ENCODE measurements at regions of chr5 and their contacts with region 1.

Region 1: DNA sequence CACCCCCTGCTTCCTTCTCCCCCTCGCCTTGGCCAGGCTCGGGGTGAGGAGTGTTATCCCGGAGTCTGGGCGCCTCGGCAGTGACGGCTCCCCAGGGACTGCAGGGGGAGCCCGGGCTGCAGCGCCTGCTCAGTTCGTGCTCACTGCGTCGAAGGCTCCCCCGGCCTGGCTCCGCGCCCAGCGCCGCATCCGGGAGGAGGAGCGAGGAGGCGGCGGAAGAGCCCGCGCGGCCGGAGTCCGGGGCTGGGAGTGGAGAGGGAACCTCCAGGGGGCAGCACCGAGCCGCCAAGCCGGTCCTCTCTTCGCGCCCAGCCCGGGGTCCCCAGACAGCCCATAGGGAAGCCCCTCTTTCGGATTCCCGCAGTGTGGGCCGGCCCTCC is 1.3 kb upstream of the EGR1 start:
- DNase-seq: peak; percentile 95
- H3K4me3 Mint-ChIP-seq: peak overlapping the region; percentile 83
- H3K27ac Mint-ChIP-seq: peak overlapping the region; percentile 95
- H3K4me1 Mint-ChIP-seq: peaks cover 50% of the 10 kb centered on the region
- H3K27me3 Mint-ChIP-seq: no peaks in the 10 kb centered on the region

Region 2: GRCh38 chr5:137754126-137754960 is 709.7 kb before region 1 on chr5 and contains the start of gene HNRNPA0:
- CTCF ChIA-PET with region 1: no interaction called
- POLR2A ChIA-PET with region 1: no interaction called
- intact Hi-C with region 1: loop called (anchors 1 kb)
- DNase-seq: peak; percentile 97
- H3K4me3 Mint-ChIP-seq: peak within 1 kb of the TSS; percentile 93
- H3K27ac Mint-ChIP-seq: peak within 1 kb of the TSS; percentile 100
- H3K4me1 Mint-ChIP-seq: peaks cover 32% of the 10 kb centered on the region
- H3K27me3 Mint-ChIP-seq: peaks cover 3% of the 10 kb centered on the region
- total RNA-seq, gene HNRNPA0: 29.2 to 29.6 TPM

Region 3: DNA sequence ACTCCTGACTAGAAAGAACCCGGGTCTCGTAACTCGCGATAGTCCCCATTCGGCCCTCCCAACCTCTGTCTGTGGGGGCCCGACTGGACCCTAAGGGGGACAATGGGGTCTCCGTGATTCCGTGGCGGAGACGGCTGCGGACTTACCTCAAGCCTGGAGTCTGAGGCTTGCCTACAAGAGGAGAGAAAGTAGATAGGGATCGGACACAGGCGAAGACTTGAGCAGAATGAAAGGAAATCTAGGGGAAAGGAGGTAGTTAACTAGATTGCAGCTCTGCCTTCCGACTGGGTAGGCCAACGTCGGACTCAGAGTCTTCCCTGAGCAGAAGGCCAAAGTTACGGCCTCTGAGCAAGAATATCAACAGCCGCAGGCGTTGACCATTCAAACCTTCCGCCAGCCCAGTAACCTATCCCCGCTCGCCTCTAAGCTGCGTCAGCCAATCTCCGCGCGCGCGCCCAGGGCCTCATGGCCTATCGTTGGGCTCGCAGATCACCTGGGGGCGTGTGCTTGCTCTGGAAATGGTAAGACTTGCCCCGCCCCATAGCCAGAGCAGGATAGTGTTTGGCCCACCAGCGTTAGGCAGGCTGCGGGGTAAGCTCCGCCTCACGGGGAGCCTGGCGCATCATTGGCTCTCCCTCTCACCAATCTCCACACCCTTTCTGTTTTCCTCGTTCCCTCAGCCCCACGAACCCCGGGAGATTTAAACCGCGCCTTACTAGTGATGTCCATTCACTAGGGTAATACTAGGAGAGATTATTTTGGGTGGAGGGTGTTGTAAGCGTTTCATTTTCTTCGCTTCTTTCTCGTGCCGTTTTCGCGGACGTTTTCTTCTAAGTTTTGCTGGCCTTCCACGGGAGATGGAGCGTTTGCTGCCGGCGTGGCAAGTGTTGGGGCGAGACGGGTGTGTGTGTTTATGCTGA is 132.3 kb before region 1 on chr5 and contains the start of gene CDC25C:
- CTCF ChIA-PET with region 1: no interaction called
- POLR2A ChIA-PET with region 1: no interaction called
- intact Hi-C with region 1: loop called (anchors 2 kb)
- DNase-seq: peak; percentile 98
- H3K4me3 Mint-ChIP-seq: peak within 1 kb of the TSS; percentile 83
- H3K27ac Mint-ChIP-seq: peak within 1 kb of the TSS; percentile 81
- H3K4me1 Mint-ChIP-seq: peaks cover 23% of the 10 kb centered on the region
- H3K27me3 Mint-ChIP-seq: no peaks in the 10 kb centered on the region
- total RNA-seq, gene CDC25C: 19.1 to 19.2 TPM

Region 4: DNA sequence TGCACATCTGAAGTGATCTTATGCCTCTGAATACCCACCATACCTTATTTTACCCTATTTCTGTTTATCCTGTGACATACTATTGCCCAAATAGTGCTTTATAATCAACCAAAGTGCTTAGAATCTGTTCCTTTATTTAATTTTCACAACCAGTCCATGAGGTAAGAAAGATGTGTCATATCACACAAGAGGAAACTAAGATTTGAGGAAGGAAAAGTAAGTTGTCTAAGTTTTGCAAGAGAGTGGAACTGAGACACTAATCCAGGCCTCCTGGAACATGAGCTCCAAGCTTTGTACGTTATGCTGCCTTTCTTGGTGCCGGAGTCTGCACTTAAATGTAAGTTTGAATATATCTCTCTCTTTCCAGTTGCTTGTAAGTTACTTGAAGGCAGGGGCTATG is 94.3 kb before region 1 on chr5:
- CTCF ChIA-PET with region 1: no interaction called
- POLR2A ChIA-PET with region 1: no interaction called
- intact Hi-C with region 1: no loop called
- DNase-seq: no peak
- H3K4me3 Mint-ChIP-seq: no peak overlapping the region
- H3K27ac Mint-ChIP-seq: no peak overlapping the region
- H3K4me1 Mint-ChIP-seq: peaks cover 45% of the 10 kb centered on the region
- H3K27me3 Mint-ChIP-seq: no peaks in the 10 kb centered on the region

Region 5: DNA sequence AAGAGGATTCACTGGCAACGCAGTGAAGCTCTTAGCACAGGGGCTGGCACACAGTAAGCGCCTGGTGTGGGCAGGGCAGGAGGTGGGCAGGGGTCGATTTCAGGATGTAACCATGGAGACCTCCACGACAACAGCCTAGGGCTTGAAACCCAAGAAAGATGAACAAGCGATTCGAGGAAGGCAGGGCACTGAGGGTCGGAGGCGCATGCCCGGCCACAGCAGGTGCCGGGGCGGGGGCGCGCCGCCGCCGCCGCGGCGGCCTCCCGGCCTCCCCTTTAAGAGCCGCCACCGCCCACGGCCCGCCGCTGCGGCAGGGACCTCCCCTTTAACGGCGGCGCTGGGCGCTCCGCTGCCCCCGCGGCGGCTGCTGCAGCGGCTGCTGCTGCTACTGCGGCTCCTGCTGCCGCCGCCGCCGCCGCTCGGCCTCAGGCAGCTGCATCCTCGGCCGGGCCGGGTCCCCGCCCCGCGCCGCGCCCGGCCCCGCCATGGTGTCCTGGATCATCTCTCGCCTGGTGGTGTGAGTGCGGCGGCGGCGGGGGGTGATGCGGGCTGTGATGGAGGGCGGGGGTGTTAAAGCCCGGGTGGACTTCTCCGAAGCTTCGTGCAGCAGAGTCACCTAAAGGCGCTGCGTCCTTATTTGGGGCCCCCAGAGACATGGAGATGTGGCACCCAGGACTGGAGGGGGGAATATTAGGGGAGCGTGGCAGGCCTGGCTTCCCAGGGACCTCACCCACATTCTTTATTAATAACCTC is 25.1 kb before region 1 on chr5 and contains the start of gene REEP2:
- CTCF ChIA-PET with region 1: interaction called, 4 read pairs
- POLR2A ChIA-PET with region 1: interaction called, 5 read pairs
- intact Hi-C with region 1: loop called (anchors 2 kb)
- DNase-seq: peak; percentile 80
- H3K4me3 Mint-ChIP-seq: peak within 1 kb of the TSS; percentile 78
- H3K27ac Mint-ChIP-seq: peak within 1 kb of the TSS; percentile 60
- H3K4me1 Mint-ChIP-seq: peaks cover 16% of the 10 kb centered on the region
- H3K27me3 Mint-ChIP-seq: peaks cover 3% of the 10 kb centered on the region
- total RNA-seq, gene REEP2: 6.1 to 10.9 TPM

Region 6: DNA sequence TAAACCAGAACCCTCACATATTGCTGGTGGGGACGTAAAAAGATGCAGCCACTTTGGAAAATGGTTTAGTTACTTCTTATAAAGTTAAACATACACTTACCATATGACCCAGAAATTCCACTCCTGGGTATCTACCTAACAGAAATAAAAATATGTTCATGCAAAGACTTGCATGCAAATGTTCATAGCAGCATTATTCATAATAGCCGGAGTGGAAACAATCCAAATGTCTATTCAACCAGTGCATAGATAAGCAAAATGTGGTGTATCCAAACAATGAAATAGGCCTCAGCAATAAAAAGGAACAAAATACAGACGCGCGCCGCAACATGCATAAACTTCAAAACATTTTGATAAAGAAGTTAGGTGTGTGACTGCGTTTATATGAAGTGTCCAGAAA is 12.9 kb after region 1 on chr5:
- CTCF ChIA-PET with region 1: no interaction called
- POLR2A ChIA-PET with region 1: no interaction called
- intact Hi-C with region 1: no loop called
- DNase-seq: no peak
- H3K4me3 Mint-ChIP-seq: no peak overlapping the region
- H3K27ac Mint-ChIP-seq: no peak overlapping the region
- H3K4me1 Mint-ChIP-seq: no peaks in the 10 kb centered on the region
- H3K27me3 Mint-ChIP-seq: peaks cover 6% of the 10 kb centered on the region

Region 7: GRCh38 chr5:138491669-138492559 is 27.9 kb after region 1 on chr5:
- CTCF ChIA-PET with region 1: interaction called, 11 read pairs
- POLR2A ChIA-PET with region 1: interaction called, 16 read pairs
- intact Hi-C with region 1: loop called (anchors 1 kb)
- DNase-seq: peak; percentile 88
- H3K4me3 Mint-ChIP-seq: peak overlapping the region; percentile 85
- H3K27ac Mint-ChIP-seq: no peak overlapping the region
- H3K4me1 Mint-ChIP-seq: peaks cover 13% of the 10 kb centered on the region
- H3K27me3 Mint-ChIP-seq: peaks cover 19% of the 10 kb centered on the region

Region 8: GRCh38 chr5:138542956-138543729 is 79.1 kb after region 1 on chr5 and contains the start of gene ETF1:
- CTCF ChIA-PET with region 1: interaction called, 18 read pairs
- POLR2A ChIA-PET with region 1: interaction called, 33 read pairs
- intact Hi-C with region 1: loop called (anchors 1 kb)
- DNase-seq: peak; percentile 100
- H3K4me3 Mint-ChIP-seq: peak within 1 kb of the TSS; percentile 98
- H3K27ac Mint-ChIP-seq: peak within 1 kb of the TSS; percentile 100
- H3K4me1 Mint-ChIP-seq: peaks cover 71% of the 10 kb centered on the region
- H3K27me3 Mint-ChIP-seq: no peaks in the 10 kb centered on the region
- total RNA-seq, gene ETF1: 131 to 132 TPM

Region 9: GRCh38 chr5:139446956-139447779 is 983.2 kb after region 1 on chr5:
- CTCF ChIA-PET with region 1: no interaction called
- POLR2A ChIA-PET with region 1: no interaction called
- intact Hi-C with region 1: loop called (anchors 5 kb)
- DNase-seq: peak; percentile 72
- H3K4me3 Mint-ChIP-seq: peak overlapping the region; percentile 7
- H3K27ac Mint-ChIP-seq: peak overlapping the region; percentile 93
- H3K4me1 Mint-ChIP-seq: peaks cover 67% of the 10 kb centered on the region
- H3K27me3 Mint-ChIP-seq: no peaks in the 10 kb centered on the region